ENCODE measurements at regions of chr15 and their contacts with region 1.

Region 1: DNA sequence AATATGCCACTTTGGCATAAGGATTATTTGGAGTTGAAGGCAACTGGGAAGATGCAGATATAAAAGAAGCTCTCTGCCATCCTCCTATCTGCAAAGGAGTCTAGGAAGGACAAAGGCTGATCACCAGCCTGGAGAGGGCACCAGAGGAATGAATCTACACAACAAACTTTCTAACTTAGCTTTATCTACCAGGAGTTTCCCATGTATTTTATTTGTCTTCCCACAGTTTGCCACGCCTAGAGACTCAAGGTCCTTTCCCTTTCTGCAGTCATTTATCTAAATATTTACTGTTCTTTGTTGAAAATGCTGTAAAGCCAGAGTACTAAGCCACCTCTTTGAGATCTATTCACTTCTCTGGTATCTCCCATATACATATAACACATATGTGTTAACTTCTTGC is 32.2 kb downstream of the GPR176 start:
- DNase-seq: peak; percentile 30
- H3K4me3 Mint-ChIP-seq: no peak overlapping the region
- H3K27ac Mint-ChIP-seq: no peak overlapping the region
- H3K4me1 Mint-ChIP-seq: no peaks in the 10 kb centered on the region
- H3K27me3 Mint-ChIP-seq: peaks cover 4% of the 10 kb centered on the region

Region 2: GRCh38 chr15:40016224-40016865 is 128.5 kb after region 1 on chr15:
- CTCF ChIA-PET with region 1: no interaction called
- intact Hi-C with region 1: loop called (anchors 5 kb)
- DNase-seq: no peak
- H3K4me3 Mint-ChIP-seq: no peak overlapping the region
- H3K27ac Mint-ChIP-seq: no peak overlapping the region
- H3K4me1 Mint-ChIP-seq: no peaks in the 10 kb centered on the region
- H3K27me3 Mint-ChIP-seq: no peaks in the 10 kb centered on the region

Region 3: DNA sequence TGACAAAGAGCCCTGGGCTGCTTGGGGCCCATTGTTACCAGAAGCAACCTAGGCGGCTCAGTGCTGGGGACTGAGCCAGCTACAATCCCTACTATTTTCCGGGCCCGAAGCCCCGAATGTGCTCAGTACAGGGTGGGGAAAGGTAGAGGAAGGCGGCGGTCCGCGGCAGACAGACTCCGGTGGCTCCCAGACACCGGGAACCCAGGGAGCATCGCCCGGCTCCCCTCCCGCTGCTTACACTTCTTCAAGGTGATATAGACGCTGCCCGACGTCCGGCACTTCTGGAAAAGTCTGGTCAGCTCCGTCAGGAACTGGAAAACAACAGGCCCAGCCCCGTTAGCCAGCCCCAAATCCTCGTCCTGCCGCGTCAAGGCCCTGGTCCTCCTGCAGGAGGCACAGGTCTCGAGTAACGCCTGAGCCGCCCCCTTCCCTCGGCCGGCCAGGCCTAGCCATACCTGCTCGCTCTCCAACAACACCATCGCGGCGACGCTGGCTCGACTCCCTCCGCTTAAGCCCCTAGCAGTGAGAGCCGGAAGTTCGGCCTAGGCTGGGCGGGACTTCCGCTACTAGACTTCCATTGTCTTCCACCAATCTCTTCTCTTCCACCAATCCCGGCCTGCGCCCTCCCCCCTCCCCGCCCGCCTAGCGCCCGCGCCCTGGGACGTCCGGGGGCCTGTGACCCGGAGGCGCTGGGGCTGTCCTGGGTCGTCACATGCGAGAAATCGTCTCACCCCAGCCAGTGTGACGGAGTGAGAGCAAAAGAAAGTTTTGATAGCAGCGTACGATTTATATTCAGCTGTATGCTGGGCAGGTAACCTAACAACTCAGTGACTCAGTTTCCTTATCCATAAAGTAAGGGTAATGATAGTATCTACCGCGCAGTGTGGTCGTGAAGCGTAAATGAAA is 151.1 kb after region 1 on chr15 and contains the start of gene SRP14:
- CTCF ChIA-PET with region 1: interaction called, 4 read pairs
- intact Hi-C with region 1: loop called (anchors 2 kb)
- DNase-seq: peak; percentile 97
- H3K4me3 Mint-ChIP-seq: peak within 1 kb of the TSS; percentile 91
- H3K27ac Mint-ChIP-seq: peak within 1 kb of the TSS; percentile 92
- H3K4me1 Mint-ChIP-seq: peaks cover 37% of the 10 kb centered on the region
- H3K27me3 Mint-ChIP-seq: no peaks in the 10 kb centered on the region
- total RNA-seq, gene SRP14: 185 to 198 TPM

Measured in activated naive CD4-positive, alpha-beta T cell treated with anti-CD3 and anti-CD28 coated beads for 36 hours (primary cell).